Esophagus muscularis mucosa (tissue), 4 donors: ENCODE measurements at regions of chr5 and their contacts with region 1.

Region 1: DNA sequence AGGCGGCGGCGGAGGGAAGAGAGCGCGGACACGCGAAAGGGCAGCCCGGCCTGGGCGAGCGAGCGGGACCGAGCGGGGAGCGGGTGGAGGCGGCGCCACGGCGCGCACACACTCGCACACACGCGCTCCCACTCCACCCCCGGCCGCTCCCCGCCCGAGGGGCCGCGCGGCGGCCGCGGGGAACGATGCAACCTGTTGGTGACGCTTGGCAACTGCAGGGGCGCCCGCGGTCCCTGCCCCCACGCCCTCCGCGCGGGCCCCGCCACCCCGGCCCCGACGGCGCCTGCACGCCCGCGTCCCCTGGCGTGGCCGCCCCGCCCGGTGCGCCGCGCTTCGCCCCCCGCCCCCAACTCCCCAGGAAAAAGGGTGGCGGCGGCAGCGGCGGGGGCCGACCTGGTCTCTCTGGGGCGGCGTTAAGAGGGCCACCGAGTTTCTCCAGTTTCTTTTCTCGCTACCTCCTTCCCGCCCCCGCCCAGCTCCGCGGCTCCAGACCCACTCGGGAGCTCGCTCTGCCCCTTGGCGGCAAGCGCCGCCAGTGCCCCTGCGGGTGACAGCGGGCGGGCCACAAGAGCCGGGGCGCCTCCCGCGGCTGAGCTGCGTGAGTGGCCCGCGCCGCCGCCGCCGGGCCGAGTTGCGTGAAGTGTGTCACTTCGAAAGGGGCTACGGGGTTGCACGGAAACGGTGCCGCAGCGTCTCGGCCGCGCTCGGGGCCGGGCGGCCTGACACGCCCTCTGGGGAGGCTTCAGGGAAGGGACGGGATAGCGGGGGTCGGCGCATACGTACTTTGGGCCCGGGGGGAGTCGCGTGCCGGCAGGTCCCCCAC is at the start of gene NR3C1:
- DNase-seq: peak; percentile 94
- H3K4me3 ChIP-seq: peak within 1 kb of the TSS; percentile 82 to 92 (median 88)
- H3K27ac ChIP-seq: peak within 1 kb of the TSS; percentile 94 to 99 (median 98)
- H3K4me1 ChIP-seq: peaks cover 5 to 28% (median 18%) of the 10 kb centered on the region in 4 donors
- H3K27me3 ChIP-seq: no peaks in the 10 kb centered on the region
- CTCF ChIP-seq: peak; percentile 43 to 65 (median 53)
- EP300 ChIP-seq: no peak
- POLR2A ChIP-seq: peak; percentile 40
- total RNA-seq, gene NR3C1: 79.2 to 92.3 (median 89.3) TPM

Region 2: DNA sequence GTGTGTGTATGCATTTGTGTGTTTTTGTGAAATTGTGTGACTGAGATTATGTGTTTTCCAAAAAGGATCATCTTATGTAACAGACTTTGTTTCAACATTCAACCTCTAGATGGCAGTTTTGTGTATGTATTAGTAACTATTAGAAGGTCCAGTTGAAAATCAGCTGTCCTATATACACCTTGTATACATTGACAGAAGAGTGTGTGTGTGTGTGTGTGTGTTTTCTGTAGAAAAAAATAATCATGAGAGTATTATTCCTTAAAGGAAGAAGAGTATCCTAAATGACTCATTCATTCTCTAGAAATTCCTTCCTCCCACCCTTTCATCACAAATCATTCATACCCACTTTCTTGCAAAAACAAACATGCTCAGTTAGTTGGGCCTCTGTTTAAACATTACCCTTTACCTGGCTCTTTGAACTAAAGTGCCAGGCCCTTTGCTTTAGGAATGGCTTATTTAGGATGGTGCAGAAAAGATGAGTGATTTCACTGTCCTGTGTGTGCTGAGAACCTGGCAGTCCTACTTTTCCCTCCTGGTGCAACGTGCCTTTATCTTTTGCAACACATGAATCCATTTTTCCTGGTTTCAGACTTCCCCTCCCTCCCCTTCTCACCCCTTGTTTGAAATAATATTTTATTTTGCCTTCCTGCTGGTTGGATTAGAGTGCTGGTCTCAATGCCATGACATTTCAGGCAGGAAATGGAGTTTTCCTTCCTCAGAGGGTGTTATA is 481.4 kb before region 1 on chr5:
- intact Hi-C with region 1: loop called (anchors 5 kb)
- DNase-seq: no peak
- H3K4me3 ChIP-seq: no peak overlapping the region
- H3K27ac ChIP-seq: no peak overlapping the region
- H3K4me1 ChIP-seq: peaks cover 20 to 37% (median 28%) of the 10 kb centered on the region in 4 donors
- H3K27me3 ChIP-seq: no peaks in the 10 kb centered on the region
- CTCF ChIP-seq: peak; percentile 54 to 55 (median 55)
- EP300 ChIP-seq: no peak
- POLR2A ChIP-seq: no peak

Region 3: GRCh38 chr5:143008809-143009521 is 394.8 kb before region 1 on chr5:
- intact Hi-C with region 1: loop called (anchors 5 kb)
- DNase-seq: no peak
- H3K4me3 ChIP-seq: no peak overlapping the region
- H3K27ac ChIP-seq: peak overlapping the region in 1 of 4 donors; percentile 0
- H3K4me1 ChIP-seq: peaks cover 34 to 41% (median 39%) of the 10 kb centered on the region in 4 donors
- H3K27me3 ChIP-seq: no peaks in the 10 kb centered on the region
- CTCF ChIP-seq: no peak
- EP300 ChIP-seq: no peak
- POLR2A ChIP-seq: no peak

Region 4: GRCh38 chr5:143106174-143106573 is 297.6 kb before region 1 on chr5:
- intact Hi-C with region 1: loop called (anchors 5 kb)
- DNase-seq: no peak
- H3K4me3 ChIP-seq: no peak overlapping the region
- H3K27ac ChIP-seq: no peak overlapping the region
- H3K4me1 ChIP-seq: peaks cover 15 to 42% (median 28%) of the 10 kb centered on the region in 4 donors
- H3K27me3 ChIP-seq: no peaks in the 10 kb centered on the region
- CTCF ChIP-seq: peak in 1 of 3 experiments; percentile 25
- EP300 ChIP-seq: no peak
- POLR2A ChIP-seq: no peak

Region 5: GRCh38 chr5:143142596-143143435 is 261.0 kb before region 1 on chr5:
- intact Hi-C with region 1: loop called (anchors 5 kb)
- DNase-seq: no peak
- H3K4me3 ChIP-seq: peak overlapping the region in 1 of 4 donors; percentile 0
- H3K27ac ChIP-seq: peak overlapping the region; percentile 70 to 84 (median 76)
- H3K4me1 ChIP-seq: peaks cover 45 to 74% (median 64%) of the 10 kb centered on the region in 4 donors
- H3K27me3 ChIP-seq: no peaks in the 10 kb centered on the region
- CTCF ChIP-seq: no peak
- EP300 ChIP-seq: no peak
- POLR2A ChIP-seq: no peak

Region 6: GRCh38 chr5:143506881-143507551 is 103.2 kb after region 1 on chr5:
- intact Hi-C with region 1: loop called (anchors 5 kb)
- DNase-seq: no peak
- H3K4me3 ChIP-seq: no peak overlapping the region
- H3K27ac ChIP-seq: peak overlapping the region; percentile 67 to 81 (median 72)
- H3K4me1 ChIP-seq: peaks cover 13 to 23% (median 18%) of the 10 kb centered on the region in 4 donors
- H3K27me3 ChIP-seq: no peaks in the 10 kb centered on the region
- CTCF ChIP-seq: peak in 1 of 3 experiments; percentile 18
- EP300 ChIP-seq: no peak
- POLR2A ChIP-seq: no peak

Region 7: DNA sequence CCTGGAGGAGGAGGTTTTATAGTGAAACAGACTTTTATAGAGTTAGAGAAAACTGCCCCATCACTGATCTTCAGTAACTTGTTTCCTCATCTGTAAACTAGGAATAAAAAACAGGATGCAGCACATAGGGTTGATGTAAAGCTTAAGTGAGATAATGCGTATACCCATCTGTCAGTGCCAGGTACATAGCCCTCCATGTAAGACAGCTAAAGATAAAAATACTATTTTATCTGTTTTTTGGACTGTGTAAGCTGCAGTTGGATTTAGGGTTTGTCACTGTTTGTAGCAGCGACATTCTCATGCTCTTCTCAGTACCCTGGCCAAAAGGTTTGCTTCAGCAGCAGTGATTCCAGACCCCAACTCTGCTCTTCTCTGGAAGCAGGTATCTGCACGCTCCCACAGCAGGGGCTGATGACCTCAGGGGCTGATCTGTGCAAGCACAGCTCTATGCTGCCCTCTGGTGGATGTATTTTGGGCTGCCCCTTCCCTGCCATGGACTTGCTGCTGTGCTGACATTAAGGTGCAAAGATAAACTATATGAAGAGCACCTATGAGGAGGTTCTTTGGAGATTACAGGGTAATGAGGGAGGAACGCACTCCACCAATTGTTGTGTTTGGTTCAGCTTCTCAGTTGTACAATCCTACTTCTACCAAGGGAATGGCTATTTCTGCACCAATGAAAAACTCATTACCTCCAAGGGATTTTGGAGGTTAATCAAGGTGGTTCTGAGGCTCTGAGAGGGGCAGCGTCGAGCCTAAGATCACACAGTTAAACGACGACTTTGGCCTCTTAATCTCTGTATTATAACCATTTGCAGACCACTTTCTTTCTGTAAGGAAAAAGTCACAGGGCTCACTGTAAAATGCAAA is 421.3 kb after region 1 on chr5:
- intact Hi-C with region 1: loop called (anchors 2 kb)
- DNase-seq: peak; percentile 94
- H3K4me3 ChIP-seq: no peak overlapping the region
- H3K27ac ChIP-seq: no peak overlapping the region
- H3K4me1 ChIP-seq: peaks cover 5 to 12% (median 7%) of the 10 kb centered on the region in 4 donors
- H3K27me3 ChIP-seq: no peaks in the 10 kb centered on the region
- CTCF ChIP-seq: peak in 2 of 3 experiments; percentile 90 to 96
- EP300 ChIP-seq: no peak
- POLR2A ChIP-seq: no peak